Activated B cell treated with CpG ODN at 0.5 μM for 24 hours (primary cell): ENCODE measurements at regions of chr3 and their contacts with region 1.

Region 1: DNA sequence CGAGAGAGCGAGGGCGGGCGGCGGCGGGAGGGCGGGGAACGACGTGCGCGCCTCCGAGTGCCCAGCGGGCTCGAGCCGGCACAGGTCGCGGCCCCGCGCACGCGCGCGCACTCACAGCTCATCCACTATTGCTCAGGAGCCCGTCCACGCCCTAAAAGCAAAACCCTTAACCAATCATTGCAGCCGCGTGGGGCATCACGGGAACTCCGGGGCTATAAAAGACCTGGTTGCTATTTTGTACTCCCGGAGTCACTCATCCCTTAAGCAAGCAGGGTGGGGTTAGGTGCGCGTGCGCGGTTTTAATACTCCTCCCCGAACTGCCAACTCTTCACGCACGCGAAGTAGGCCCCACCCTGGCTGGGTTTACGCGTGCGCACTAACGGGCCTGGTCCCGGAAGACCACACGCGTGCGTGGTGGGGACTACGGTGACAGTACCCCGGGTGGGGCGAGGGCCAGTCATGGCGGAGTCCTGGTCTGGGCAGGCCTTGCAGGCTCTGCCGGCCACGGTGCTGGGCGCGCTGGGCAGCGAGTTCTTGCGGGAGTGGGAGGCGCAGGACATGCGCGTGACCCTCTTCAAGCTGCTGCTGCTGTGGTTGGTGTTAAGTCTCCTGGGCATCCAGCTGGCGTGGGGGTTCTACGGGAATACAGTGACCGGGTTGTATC is at the starts of genes RHOA and TCTA:
- DNase-seq: peak; percentile 95
- ATAC-seq: peak; percentile 82
- H3K4me3 Mint-ChIP-seq: peak within 1 kb of the TSS; percentile 92
- H3K27ac Mint-ChIP-seq: peak within 1 kb of the TSS; percentile 92
- H3K4me1 Mint-ChIP-seq: peaks cover 79% of the 10 kb centered on the region
- H3K27me3 Mint-ChIP-seq: no peaks in the 10 kb centered on the region
- CTCF ChIP-seq: no peak
- total RNA-seq, gene RHOA: 399 and 425 TPM in 2 replicates
- total RNA-seq, gene TCTA: 26.4 and 32.2 TPM in 2 replicates

Region 2: DNA sequence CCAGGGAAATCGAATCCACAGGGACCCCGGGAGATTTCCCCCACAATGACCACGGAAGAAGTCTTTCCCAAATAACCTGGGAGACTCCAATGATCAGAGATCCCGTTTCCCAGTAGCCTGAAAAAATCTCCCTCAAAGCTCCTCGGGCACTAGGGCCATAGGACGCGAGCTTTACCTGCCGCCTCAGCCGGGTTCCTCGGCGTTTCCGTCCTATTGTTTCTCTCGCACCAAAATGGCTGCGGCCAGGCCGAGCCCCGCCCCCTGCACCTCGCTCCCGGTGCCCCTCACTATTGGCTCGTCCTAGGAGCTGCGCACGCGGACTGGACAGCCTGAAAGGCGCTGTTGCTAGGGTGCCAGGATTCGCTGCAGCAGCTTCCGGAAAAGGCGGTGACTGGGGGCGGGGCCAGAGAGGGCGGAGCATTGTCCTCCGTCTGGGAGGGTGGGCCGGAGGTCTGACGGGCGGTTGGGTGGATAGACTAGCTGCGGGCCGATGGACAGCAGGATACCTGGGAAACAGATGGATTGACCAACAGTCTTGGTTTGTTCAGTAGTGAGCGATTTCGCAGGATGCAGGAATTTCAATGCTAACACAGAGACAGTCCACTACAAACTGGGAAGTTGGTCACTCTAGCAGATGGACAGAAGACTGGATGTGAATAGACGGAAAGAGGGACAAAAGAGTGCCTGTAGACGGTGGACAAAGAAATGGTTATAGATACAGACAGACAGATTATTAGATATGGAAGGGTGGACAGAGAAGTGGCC is 694.9 kb before region 1 on chr3 and contains the start of gene IP6K2:
- CTCF ChIA-PET with region 1: no interaction called
- POLR2A ChIA-PET with region 1: no interaction called
- intact Hi-C with region 1: loop called (anchors 10 kb)
- DNase-seq: peak; percentile 98
- ATAC-seq: peak; percentile 99
- H3K4me3 Mint-ChIP-seq: peak within 1 kb of the TSS; percentile 98
- H3K27ac Mint-ChIP-seq: peak within 1 kb of the TSS; percentile 94
- H3K4me1 Mint-ChIP-seq: peaks cover 37% of the 10 kb centered on the region
- H3K27me3 Mint-ChIP-seq: peaks cover 4% of the 10 kb centered on the region
- CTCF ChIP-seq: no peak
- total RNA-seq, gene IP6K2: 83.2 and 94.1 TPM in 2 replicates

Region 3: DNA sequence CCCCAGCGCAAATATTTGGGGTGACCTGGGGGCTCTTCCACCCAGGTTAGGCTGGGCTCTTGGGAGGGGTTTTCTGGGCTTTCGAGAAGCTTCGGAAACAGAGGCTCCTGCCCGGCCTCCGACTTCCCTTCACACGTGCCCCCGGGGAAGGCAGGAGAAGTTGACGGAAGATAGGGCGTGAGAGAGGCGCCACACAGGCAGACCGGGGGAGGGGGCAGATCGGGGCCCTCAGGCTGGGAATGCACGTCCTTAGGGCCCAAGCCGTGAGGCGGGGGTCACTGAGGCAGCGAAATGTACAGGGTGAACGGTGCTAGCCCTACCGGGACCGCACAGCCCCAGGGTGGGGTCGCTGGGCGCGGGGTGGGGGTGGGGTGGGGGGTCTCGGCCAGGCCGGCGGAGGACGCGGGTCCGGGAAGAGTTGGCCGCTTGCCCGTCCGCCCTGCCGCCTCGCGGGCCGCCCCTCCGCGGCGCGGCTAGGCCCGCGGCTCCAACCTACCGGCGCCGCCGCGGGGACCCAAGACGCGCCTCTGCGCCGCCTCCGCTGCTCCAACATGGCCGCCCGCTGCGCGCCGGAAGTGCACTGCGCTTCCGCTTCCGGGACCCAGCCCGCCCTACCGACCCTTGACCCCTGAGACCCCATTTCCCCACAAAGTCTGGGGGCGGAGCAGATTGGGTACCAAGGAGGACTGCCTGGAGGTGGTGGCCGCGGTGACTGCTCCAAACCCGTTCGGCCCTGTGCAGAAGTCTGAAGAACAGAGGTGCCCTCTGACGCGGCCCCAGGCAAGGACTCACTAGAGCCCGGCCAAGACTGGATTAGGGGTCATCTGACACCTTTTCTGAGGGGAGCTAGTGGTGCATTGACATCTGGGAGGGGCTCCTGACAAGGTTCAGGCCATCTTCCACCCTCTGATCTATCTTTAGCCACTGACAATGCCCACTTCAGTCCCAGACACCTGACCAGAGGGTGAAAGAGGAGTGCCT is 246.0 kb before region 1 on chr3 and contains the start of gene CCDC71:
- CTCF ChIA-PET with region 1: no interaction called
- POLR2A ChIA-PET with region 1: no interaction called
- intact Hi-C with region 1: no loop called
- DNase-seq: peak; percentile 74
- ATAC-seq: peak; percentile 83
- H3K4me3 Mint-ChIP-seq: peak within 1 kb of the TSS; percentile 92
- H3K27ac Mint-ChIP-seq: peak within 1 kb of the TSS; percentile 84
- H3K4me1 Mint-ChIP-seq: peaks cover 26% of the 10 kb centered on the region
- H3K27me3 Mint-ChIP-seq: peaks cover 2% of the 10 kb centered on the region
- CTCF ChIP-seq: no peak
- total RNA-seq, gene CCDC71: 28.3 and 28.9 TPM in 2 replicates

Region 4: DNA sequence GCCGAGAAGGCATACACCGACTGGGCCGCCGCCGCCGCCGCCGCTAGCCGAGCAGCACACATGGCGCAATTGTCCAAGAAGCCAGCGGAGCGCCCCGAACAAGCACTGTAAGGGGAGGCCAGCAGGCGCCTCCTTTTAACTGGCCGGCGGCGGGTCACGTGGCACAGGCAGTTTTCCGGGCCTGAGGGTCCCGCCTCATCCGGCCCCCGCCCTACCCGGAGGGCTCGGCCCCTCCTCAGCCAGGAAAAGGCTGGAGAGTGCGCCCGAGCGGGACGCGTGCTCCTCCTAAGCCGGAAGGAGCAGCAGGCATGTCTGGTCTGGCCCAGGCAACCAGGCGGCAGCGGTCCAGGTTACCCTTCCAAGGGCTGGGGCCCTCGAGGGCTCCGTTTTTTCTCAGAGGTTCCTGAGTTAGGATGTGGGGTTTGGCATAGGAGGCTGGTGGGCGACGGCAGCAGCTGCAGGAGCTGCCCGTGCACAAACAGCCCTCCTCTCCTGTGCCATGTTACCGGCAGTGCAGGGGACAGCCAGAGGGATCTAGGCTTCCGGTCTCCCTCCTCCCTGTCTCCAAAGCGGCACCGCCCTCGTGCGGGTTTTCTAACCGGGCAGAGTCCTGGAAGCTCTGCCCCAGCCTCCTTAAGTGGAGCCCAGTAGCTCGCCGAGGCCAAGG is 53.8 kb before region 1 on chr3 and contains the start of gene GPX1:
- CTCF ChIA-PET with region 1: no interaction called
- POLR2A ChIA-PET with region 1: interaction called, 11 read pairs
- intact Hi-C with region 1: no loop called
- DNase-seq: peak; percentile 67
- ATAC-seq: peak; percentile 77
- H3K4me3 Mint-ChIP-seq: peak within 1 kb of the TSS; percentile 89
- H3K27ac Mint-ChIP-seq: peak within 1 kb of the TSS; percentile 90
- H3K4me1 Mint-ChIP-seq: peaks cover 35% of the 10 kb centered on the region
- H3K27me3 Mint-ChIP-seq: no peaks in the 10 kb centered on the region
- CTCF ChIP-seq: no peak
- total RNA-seq, gene GPX1: 90.0 and 94.6 TPM in 2 replicates

Region 5: GRCh38 chr3:49428697-49429100 is 16.6 kb after region 1 on chr3:
- CTCF ChIA-PET with region 1: interaction called, 4 read pairs
- POLR2A ChIA-PET with region 1: interaction called, 43 read pairs
- intact Hi-C with region 1: loop called (anchors 1 kb)
- DNase-seq: no peak
- ATAC-seq: peak; percentile 1
- H3K4me3 Mint-ChIP-seq: peak overlapping the region; percentile 92
- H3K27ac Mint-ChIP-seq: peak overlapping the region; percentile 96
- H3K4me1 Mint-ChIP-seq: peaks cover 17% of the 10 kb centered on the region
- H3K27me3 Mint-ChIP-seq: no peaks in the 10 kb centered on the region
- CTCF ChIP-seq: no peak

Region 6: GRCh38 chr3:49454458-49454857 is 42.4 kb after region 1 on chr3:
- CTCF ChIA-PET with region 1: interaction called, 22 read pairs
- POLR2A ChIA-PET with region 1: interaction called, 8 read pairs
- intact Hi-C with region 1: loop called (anchors 1 kb)
- DNase-seq: no peak
- ATAC-seq: no peak
- H3K4me3 Mint-ChIP-seq: no peak overlapping the region
- H3K27ac Mint-ChIP-seq: no peak overlapping the region
- H3K4me1 Mint-ChIP-seq: no peaks in the 10 kb centered on the region
- H3K27me3 Mint-ChIP-seq: no peaks in the 10 kb centered on the region
- CTCF ChIP-seq: no peak

Region 7: GRCh38 chr3:49519916-49520385 is 107.9 kb after region 1 on chr3:
- CTCF ChIA-PET with region 1: no interaction called
- POLR2A ChIA-PET with region 1: no interaction called
- intact Hi-C with region 1: no loop called
- DNase-seq: no peak
- ATAC-seq: no peak
- H3K4me3 Mint-ChIP-seq: no peak overlapping the region
- H3K27ac Mint-ChIP-seq: no peak overlapping the region
- H3K4me1 Mint-ChIP-seq: peaks cover 10% of the 10 kb centered on the region
- H3K27me3 Mint-ChIP-seq: no peaks in the 10 kb centered on the region
- CTCF ChIP-seq: no peak

Region 8: GRCh38 chr3:49673715-49674496 is 261.8 kb after region 1 on chr3 and contains the start of gene APEH:
- CTCF ChIA-PET with region 1: no interaction called
- POLR2A ChIA-PET with region 1: no interaction called
- intact Hi-C with region 1: loop called (anchors 5 kb)
- DNase-seq: peak; percentile 98
- ATAC-seq: peak; percentile 88
- H3K4me3 Mint-ChIP-seq: peak within 1 kb of the TSS; percentile 91
- H3K27ac Mint-ChIP-seq: peak within 1 kb of the TSS; percentile 98
- H3K4me1 Mint-ChIP-seq: peaks cover 22% of the 10 kb centered on the region
- H3K27me3 Mint-ChIP-seq: no peaks in the 10 kb centered on the region
- CTCF ChIP-seq: no peak
- total RNA-seq, gene APEH: 109 and 113 TPM in 2 replicates